Activated CD4-positive, alpha-beta memory T cell treated with anti-CD3 and anti-CD28 coated beads for 36 hours (primary cell): ENCODE measurements at regions of chr2 and their contacts with region 1.

Region 1: GRCh38 chr2:199979832-199980628 is 24.6 kb downstream of the MAIP1 start:
- DNase-seq: peak; percentile 88
- H3K4me3 Mint-ChIP-seq: no peak overlapping the region
- H3K27ac Mint-ChIP-seq: no peak overlapping the region
- H3K4me1 Mint-ChIP-seq: peaks cover 23% of the 10 kb centered on the region
- H3K27me3 Mint-ChIP-seq: no peaks in the 10 kb centered on the region

Region 2: GRCh38 chr2:199962203-199962602 is 17.8 kb before region 1 on chr2:
- CTCF ChIA-PET with region 1: no interaction called
- POLR2A ChIA-PET with region 1: no interaction called
- intact Hi-C with region 1: no loop called
- DNase-seq: no peak
- H3K4me3 Mint-ChIP-seq: no peak overlapping the region
- H3K27ac Mint-ChIP-seq: peak overlapping the region; percentile 2
- H3K4me1 Mint-ChIP-seq: peaks cover 29% of the 10 kb centered on the region
- H3K27me3 Mint-ChIP-seq: no peaks in the 10 kb centered on the region

Region 3: GRCh38 chr2:200306196-200306930 is 326.3 kb after region 1 on chr2 and contains the start of gene SPATS2L:
- CTCF ChIA-PET with region 1: no interaction called
- POLR2A ChIA-PET with region 1: no interaction called
- intact Hi-C with region 1: loop called (anchors 2 kb)
- DNase-seq: peak; percentile 75
- H3K4me3 Mint-ChIP-seq: peak within 1 kb of the TSS; percentile 82
- H3K27ac Mint-ChIP-seq: peak within 1 kb of the TSS; percentile 52
- H3K4me1 Mint-ChIP-seq: peaks cover 25% of the 10 kb centered on the region
- H3K27me3 Mint-ChIP-seq: peaks cover 4% of the 10 kb centered on the region
- total RNA-seq, gene SPATS2L: 25.4 to 28.8 TPM

Region 4: GRCh38 chr2:200421270-200421669 is 441.2 kb after region 1 on chr2:
- CTCF ChIA-PET with region 1: no interaction called
- POLR2A ChIA-PET with region 1: no interaction called
- intact Hi-C with region 1: loop called (anchors 1 kb)
- DNase-seq: no peak
- H3K4me3 Mint-ChIP-seq: no peak overlapping the region
- H3K27ac Mint-ChIP-seq: no peak overlapping the region
- H3K4me1 Mint-ChIP-seq: peaks cover 12% of the 10 kb centered on the region
- H3K27me3 Mint-ChIP-seq: no peaks in the 10 kb centered on the region

Region 5: DNA sequence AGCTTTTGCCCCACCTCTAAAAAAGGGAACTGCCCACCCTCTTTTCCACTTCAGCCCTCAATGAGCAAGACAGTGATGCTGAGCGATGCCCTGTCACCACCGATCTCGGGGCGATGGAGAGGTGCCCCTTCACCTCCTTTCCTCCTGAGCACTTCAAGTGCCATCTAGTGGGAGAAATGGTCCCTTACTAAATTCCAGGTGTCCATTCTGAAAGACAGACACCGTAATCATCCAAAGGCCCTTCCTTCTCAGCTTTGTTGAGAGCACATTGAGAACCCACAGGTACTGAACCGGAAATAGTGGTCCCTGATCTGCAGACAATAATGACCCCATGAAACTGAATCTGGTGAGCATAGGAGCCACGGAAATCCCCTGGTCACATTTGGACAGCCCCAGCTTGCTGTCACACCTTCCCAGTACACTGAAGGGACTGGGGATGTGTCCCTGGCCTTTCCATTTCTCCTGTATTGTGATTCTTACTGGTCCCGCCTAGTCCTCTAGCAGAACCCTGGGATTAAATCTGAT is 491.4 kb after region 1 on chr2:
- CTCF ChIA-PET with region 1: interaction called, 24 read pairs
- POLR2A ChIA-PET with region 1: no interaction called
- intact Hi-C with region 1: loop called (anchors 1 kb)
- DNase-seq: peak; percentile 63
- H3K4me3 Mint-ChIP-seq: no peak overlapping the region
- H3K27ac Mint-ChIP-seq: no peak overlapping the region
- H3K4me1 Mint-ChIP-seq: peaks cover 35% of the 10 kb centered on the region
- H3K27me3 Mint-ChIP-seq: no peaks in the 10 kb centered on the region

Region 6: GRCh38 chr2:200578778-200579177 is 598.7 kb after region 1 on chr2:
- CTCF ChIA-PET with region 1: no interaction called
- POLR2A ChIA-PET with region 1: no interaction called
- intact Hi-C with region 1: loop called (anchors 5 kb)
- DNase-seq: no peak
- H3K4me3 Mint-ChIP-seq: no peak overlapping the region
- H3K27ac Mint-ChIP-seq: no peak overlapping the region
- H3K4me1 Mint-ChIP-seq: peaks cover 12% of the 10 kb centered on the region
- H3K27me3 Mint-ChIP-seq: no peaks in the 10 kb centered on the region